ENCODE measurements at regions of chr2 and their contacts with region 1.

Region 1: DNA sequence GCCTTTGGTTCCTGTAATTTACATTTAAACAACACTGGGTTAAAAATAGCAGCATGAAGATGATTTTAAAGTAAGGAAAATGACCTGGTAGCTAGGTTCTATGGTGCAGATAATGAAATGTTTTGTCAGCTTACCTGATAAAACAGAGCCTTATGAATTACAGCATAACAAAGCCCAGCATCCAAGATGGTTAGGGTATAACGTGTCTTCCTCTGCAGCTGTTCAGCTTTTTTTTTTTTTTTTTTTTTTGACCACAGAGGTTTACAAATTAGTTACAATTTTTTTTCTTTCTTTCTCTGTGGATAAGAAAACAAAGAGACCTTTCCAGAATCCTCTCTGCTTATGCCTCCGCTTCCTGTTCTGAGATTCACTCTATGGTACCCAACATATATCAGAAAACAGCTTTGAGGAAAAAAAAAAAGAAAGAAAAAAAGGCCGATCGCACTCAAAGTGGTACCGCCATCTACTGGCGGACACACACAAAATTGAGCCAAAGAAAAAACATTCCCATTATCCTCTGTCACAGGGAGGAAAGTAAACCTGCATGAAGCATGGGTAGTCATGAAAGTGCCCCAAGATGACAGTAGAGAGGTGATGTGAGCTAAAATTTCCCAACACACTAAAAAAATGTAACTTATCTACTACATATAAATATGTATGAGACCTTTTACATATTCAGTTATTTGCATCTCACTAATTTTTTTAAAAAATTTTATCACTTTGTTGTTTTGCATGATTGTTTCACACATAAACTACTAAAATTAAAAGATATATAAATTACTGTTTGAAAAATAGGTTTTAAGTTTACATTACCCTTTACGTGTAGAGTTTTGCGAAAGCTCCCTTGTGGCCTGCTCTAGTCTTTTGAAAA is at the start of gene SCN3A:
- DNase-seq: peak; percentile 6 to 10
- ATAC-seq: peak in 1 of 8 donors; percentile 19
- H3K4me3 ChIP-seq: peak within 1 kb of the TSS in 7 of 10 donors; percentile 1 to 37 (median 18)
- H3K27ac ChIP-seq: no peak within 1 kb of the TSS
- H3K4me1 ChIP-seq: no peaks in the 10 kb centered on the region
- H3K27me3 ChIP-seq: no peaks in the 10 kb centered on the region
- CTCF ChIP-seq: peak; percentile 35 to 83 (median 73)
- total RNA-seq, gene SCN3A: 0.53 to 2.6 (median 0.82) TPM

Region 2: DNA sequence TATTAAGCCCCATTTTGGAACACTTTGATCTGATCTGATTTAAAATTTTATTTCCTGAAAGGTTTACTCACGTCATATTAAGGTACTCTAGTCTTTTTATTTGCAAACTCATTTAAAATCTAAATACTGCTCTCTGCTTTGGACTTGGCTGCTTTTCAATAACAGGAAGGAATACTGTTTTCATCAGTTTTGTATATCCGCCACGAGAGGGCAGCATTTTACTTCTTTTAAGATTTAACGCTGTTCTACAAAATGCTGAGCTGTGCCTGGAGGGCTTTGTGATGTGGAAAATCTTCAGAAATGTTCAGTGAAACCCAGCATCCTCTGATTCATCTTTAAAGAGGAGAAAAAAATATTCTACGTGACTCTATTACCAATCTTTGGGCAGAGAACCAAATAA is 211.1 kb before region 1 on chr2:
- intact Hi-C with region 1: loop called in 1 of 10 experiments (anchors 2 kb)
- DNase-seq: peak in 1 of 2 donors; percentile 73
- ATAC-seq: peak in 7 of 8 donors; percentile 55 to 80 (median 65)
- H3K4me3 ChIP-seq: no peak overlapping the region
- H3K27ac ChIP-seq: no peak overlapping the region
- H3K4me1 ChIP-seq: peaks cover 0 to 18% (median 9%) of the 10 kb centered on the region in 9 donors
- H3K27me3 ChIP-seq: no peaks in the 10 kb centered on the region
- CTCF ChIP-seq: peak; percentile 26 to 70 (median 58)

Region 3: GRCh38 chr2:165003433-165004130 is 200.3 kb before region 1 on chr2:
- intact Hi-C with region 1: loop called in 1 of 10 experiments (anchors 5 kb)
- DNase-seq: no peak
- ATAC-seq: no peak
- H3K4me3 ChIP-seq: no peak overlapping the region
- H3K27ac ChIP-seq: no peak overlapping the region
- H3K4me1 ChIP-seq: peaks cover 0 to 11% (median 0%) of the 10 kb centered on the region in 9 donors
- H3K27me3 ChIP-seq: no peaks in the 10 kb centered on the region
- CTCF ChIP-seq: no peak

Region 4: GRCh38 chr2:165144315-165144714 is 59.6 kb before region 1 on chr2:
- intact Hi-C with region 1: loop called in 1 of 10 experiments (anchors 5 kb)
- DNase-seq: no peak
- ATAC-seq: no peak
- H3K4me3 ChIP-seq: no peak overlapping the region
- H3K27ac ChIP-seq: no peak overlapping the region
- H3K4me1 ChIP-seq: no peaks in the 10 kb centered on the region
- H3K27me3 ChIP-seq: no peaks in the 10 kb centered on the region
- CTCF ChIP-seq: no peak

Region 5: GRCh38 chr2:165281387-165281786 is 77.5 kb after region 1 on chr2:
- intact Hi-C with region 1: no loop called
- DNase-seq: no peak
- ATAC-seq: no peak
- H3K4me3 ChIP-seq: no peak overlapping the region
- H3K27ac ChIP-seq: no peak overlapping the region
- H3K4me1 ChIP-seq: no peaks in the 10 kb centered on the region
- H3K27me3 ChIP-seq: no peaks in the 10 kb centered on the region
- CTCF ChIP-seq: no peak

Region 6: GRCh38 chr2:165328272-165328671 is 124.3 kb after region 1 on chr2:
- intact Hi-C with region 1: no loop called
- DNase-seq: no peak
- ATAC-seq: no peak
- H3K4me3 ChIP-seq: no peak overlapping the region
- H3K27ac ChIP-seq: no peak overlapping the region
- H3K4me1 ChIP-seq: no peaks in the 10 kb centered on the region
- H3K27me3 ChIP-seq: no peaks in the 10 kb centered on the region
- CTCF ChIP-seq: no peak